ENCODE measurements at regions of chr14 and their contacts with region 1.

Region 1: GRCh38 chr14:73644531-73645247 is at the start of gene DNAL1:
- DNase-seq: peak; percentile 97
- ATAC-seq: peak; percentile 100
- total RNA-seq, gene DNAL1: 16.4 TPM

Region 2: GRCh38 chr14:72723858-72724530 is 920.7 kb before region 1 on chr14:
- intact Hi-C with region 1: no loop called
- DNase-seq: no peak
- ATAC-seq: no peak

Region 3: DNA sequence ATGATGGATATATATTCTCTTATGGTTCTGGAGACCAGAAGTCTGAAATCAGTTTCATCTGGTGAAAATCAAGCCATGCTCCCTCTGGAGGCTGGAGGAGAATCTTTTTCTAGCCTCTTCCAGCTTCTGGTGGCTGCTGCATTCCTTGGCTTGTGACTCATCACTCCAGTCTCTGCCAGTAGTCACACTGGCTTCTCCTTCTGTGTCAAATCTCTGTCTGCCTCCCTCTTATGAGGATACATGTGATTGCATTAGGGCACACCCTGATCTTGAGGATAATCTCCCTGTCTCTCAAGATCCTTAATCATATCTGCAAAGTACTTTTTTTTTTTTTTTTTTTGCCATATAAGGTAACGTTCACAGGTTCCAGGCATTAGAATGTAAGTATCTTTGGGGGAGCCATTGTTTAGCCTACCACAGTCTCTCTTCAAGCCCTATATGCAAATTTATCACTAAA is 17.8 kb after region 1 on chr14:
- intact Hi-C with region 1: no loop called
- DNase-seq: no peak
- ATAC-seq: no peak

Region 4: GRCh38 chr14:73713803-73714655 is 69.3 kb after region 1 on chr14 and contains the start of gene PNMA1:
- intact Hi-C with region 1: loop called (anchors 5 kb)
- DNase-seq: peak; percentile 92
- ATAC-seq: peak; percentile 93
- total RNA-seq, gene PNMA1: 14.9 TPM

Region 5: DNA sequence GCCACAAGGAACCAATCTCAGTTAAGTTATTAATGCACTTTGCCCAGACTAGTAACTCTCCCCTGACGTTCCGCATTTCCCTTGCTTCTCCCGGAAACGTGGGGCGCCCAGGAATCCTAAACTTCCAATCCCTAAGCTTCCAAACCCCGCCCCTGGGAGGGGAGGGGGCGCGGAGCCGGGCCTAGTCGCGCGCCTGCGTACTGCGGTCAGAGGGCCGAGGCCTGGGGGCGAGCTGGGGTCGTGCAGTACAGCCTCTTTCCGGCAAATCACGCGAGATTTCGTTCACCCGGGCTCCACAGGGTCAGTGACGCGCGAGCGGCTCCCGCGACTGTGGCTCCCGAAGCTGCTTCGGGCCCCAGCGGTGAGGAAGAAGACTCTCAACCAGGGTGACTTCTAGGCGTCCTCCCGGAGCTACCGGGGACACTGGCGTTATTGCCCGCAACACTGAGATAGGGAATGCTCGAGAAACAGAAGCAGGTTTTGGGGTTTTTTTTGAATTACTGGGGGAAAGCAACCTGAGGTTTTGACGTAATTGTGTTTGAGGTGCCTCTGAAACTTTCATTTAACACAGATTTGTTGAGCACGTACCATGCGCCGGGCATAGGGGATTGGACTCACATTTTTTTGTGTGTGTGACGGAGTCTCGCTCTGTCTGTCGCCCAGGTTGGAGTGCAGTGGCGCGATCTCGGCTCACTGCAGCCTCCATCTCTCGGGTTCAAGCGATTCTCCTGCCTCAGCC is 207.1 kb after region 1 on chr14 and contains the start of gene PTGR2:
- intact Hi-C with region 1: loop called (anchors 10 kb)
- DNase-seq: peak; percentile 96
- ATAC-seq: peak; percentile 99
- total RNA-seq, gene PTGR2: 32.8 TPM